Kidney (tissue), 22 donors: ENCODE measurements at regions of chr15 and their contacts with region 1.

Region 1: GRCh38 chr15:42920519-42921227 is at the start of gene TTBK2:
- DNase-seq: peak; percentile 99
- H3K4me3 ChIP-seq: peak within 1 kb of the TSS; percentile 93 to 96 (median 94)
- H3K27ac ChIP-seq: peak within 1 kb of the TSS; percentile 74 to 84
- H3K4me1 ChIP-seq: peaks cover 0 to 6% (median 6%) of the 10 kb centered on the region in 3 donors
- H3K27me3 ChIP-seq: no peaks in the 10 kb centered on the region
- CTCF ChIP-seq: peak; percentile 14
- total RNA-seq, gene TTBK2: 19.1 TPM

Region 2: GRCh38 chr15:42723054-42723453 is 197.6 kb before region 1 on chr15:
- intact Hi-C with region 1: loop called (anchors 10 kb)
- DNase-seq: no peak
- H3K4me3 ChIP-seq: no peak overlapping the region
- H3K27ac ChIP-seq: no peak overlapping the region
- H3K4me1 ChIP-seq: no peaks in the 10 kb centered on the region
- H3K27me3 ChIP-seq: no peaks in the 10 kb centered on the region
- CTCF ChIP-seq: no peak